Activated B cell treated with CpG ODN at 0.5 μM for 24 hours (primary cell): ENCODE measurements at regions of chr9 and their contacts with region 1.

Region 1: GRCh38 chr9:19441730-19442129 is 32.9 kb downstream of the ACER2 start:
- DNase-seq: no peak
- ATAC-seq: peak; percentile 61
- H3K4me3 Mint-ChIP-seq: peak overlapping the region; percentile 55
- H3K27ac Mint-ChIP-seq: peak overlapping the region; percentile 60
- H3K4me1 Mint-ChIP-seq: peaks cover 14% of the 10 kb centered on the region
- H3K27me3 Mint-ChIP-seq: no peaks in the 10 kb centered on the region
- CTCF ChIP-seq: no peak

Region 2: DNA sequence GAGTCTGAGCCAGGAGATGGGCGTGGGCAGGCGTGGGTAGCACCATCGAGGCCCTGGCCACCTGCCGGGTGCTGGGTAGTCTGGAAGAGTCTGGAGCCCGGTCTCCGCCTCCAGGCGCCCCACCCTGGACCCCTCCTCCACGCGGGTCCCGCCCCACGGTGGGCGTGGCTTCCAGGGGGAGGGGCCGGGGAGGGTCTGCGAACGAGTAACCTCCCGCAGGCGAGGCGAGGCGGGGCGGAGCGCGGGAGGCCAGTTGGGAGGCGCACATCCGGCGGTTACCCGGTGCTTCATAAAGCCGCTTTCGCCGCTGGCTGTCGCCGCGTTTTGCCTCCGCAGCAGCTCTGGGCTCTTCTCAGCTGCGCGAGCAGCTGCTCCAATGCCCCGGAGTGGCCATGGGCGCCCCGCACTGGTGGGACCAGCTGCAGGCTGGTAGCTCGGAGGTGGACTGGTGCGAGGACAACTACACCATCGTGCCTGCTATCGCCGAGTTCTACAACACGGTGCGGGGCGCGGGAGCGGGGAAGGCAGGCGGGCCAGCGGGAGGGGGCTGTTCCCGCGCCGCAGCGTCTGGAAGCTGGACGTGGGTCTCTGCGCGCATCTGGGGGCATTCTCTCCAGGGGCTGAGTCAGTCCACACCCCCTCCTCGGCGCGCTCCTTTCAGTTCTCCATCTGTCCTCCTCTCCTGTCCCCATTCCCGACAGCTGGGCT is 32.9 kb before region 1 on chr9 and contains the start of gene ACER2:
- CTCF ChIA-PET with region 1: no interaction called
- POLR2A ChIA-PET with region 1: interaction called, 3 read pairs
- intact Hi-C with region 1: loop called (anchors 2 kb)
- DNase-seq: peak; percentile 99
- ATAC-seq: peak; percentile 97
- H3K4me3 Mint-ChIP-seq: peak within 1 kb of the TSS; percentile 94
- H3K27ac Mint-ChIP-seq: peak within 1 kb of the TSS; percentile 69
- H3K4me1 Mint-ChIP-seq: peaks cover 12% of the 10 kb centered on the region
- H3K27me3 Mint-ChIP-seq: no peaks in the 10 kb centered on the region
- CTCF ChIP-seq: no peak
- total RNA-seq, gene ACER2: 1.4 and 2.0 TPM in 2 replicates

Region 3: DNA sequence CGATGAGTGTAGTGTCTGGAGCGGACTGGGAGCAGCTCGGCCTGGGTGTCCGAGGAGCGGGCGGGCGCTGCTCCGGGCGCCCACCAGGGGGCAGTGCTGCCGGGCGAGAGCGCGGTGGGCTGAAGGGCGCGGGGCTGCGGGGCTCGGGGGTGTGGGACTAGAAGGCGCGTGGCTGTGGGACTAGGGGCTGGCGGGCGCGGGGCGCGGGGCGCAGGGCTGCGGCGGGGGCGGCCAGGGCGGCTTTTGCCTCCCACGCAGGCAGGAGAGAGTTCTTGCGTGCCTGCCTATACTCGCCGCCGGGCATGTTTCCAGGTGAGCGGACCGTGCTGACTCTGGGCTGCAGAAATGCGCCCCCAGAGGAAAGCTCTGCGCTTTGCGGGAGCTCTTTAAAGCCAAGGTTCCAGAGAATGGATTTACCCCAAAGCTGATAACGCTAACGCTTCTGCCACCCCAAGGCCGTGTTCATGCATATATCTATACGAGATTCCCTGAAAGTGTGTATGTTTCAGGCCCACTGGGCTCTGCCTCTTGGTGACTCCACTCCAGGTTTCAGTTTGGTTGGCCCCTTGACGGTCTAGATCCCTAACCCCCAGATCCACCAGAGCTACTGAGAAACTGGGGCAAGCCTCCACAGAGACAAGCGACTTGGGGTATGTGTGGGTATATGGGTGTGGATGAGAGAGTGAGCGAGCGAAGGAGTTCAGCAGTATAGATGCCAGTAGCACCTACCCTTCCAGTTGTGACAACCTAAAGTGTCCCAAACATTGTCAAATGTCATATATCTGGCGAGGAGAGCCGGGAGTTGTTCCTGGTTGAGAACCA is 23.2 kb after region 1 on chr9:
- CTCF ChIA-PET with region 1: interaction called, 11 read pairs
- POLR2A ChIA-PET with region 1: no interaction called
- intact Hi-C with region 1: no loop called
- DNase-seq: peak; percentile 77
- ATAC-seq: peak; percentile 93
- H3K4me3 Mint-ChIP-seq: peak overlapping the region; percentile 88
- H3K27ac Mint-ChIP-seq: peak overlapping the region; percentile 69
- H3K4me1 Mint-ChIP-seq: peaks cover 11% of the 10 kb centered on the region
- H3K27me3 Mint-ChIP-seq: no peaks in the 10 kb centered on the region
- CTCF ChIP-seq: peak; percentile 60